Activated CD8-positive, alpha-beta T cell treated with anti-CD3 and anti-CD28 coated beads, Interleukin-2, amount 10 ng/mL, durations not matched to agents 7 days and 5 days (primary cell): ENCODE measurements at regions of chr3 and their contacts with region 1.

Region 1: DNA sequence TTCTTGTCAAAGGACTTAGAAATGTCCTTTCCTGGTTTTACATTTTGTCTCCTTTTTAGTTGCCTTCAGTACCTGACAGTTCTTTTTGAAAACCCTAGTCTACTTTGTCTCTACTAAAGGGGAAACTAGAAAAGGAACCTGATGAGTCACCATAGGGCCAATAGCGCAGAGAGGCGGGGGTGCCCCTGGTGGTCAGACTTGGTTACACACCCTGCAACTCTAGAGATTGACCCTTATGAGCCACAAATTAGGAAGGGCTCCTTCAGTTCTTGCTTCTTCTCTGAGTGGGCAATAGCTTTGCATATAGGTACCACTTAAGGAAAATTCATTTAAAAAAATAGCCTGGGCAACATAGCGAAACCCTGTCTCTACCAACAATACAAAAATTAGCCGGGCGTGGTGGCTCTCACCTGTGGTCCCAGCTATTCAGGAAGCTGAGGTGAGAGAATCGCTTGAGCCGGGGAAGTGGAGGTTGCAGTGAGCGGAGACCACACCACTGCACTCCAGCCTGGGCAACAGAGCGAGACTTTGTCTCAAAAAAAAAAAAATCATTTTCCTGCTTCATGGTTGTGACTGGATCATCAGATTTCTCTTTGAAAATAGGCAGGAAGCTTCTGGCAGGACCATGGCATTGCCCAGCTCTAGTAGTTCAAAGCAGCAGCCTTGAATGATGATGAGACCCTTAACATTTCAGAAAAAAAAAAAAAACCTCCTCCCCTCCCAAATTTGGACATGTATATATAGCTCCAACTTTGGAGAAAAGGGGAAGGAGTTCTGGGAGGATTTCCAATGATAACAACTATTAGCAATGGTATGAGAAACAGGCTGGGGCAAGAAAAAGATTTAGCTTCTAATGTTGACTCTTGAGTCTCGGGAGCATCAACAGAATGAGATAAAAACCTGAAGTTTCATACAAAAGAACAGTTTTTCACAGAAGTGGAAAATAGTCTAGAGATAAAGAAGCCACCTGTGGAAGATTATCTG is 45.2 kb upstream of the RASA2 start:
- DNase-seq: peak; percentile 87
- ATAC-seq: peak; percentile 99
- H3K4me3 Mint-ChIP-seq: peak overlapping the region; percentile 20
- H3K27ac Mint-ChIP-seq: peak overlapping the region; percentile 55
- H3K4me1 Mint-ChIP-seq: peaks cover 31% of the 10 kb centered on the region
- H3K27me3 Mint-ChIP-seq: no peaks in the 10 kb centered on the region

Region 2: DNA sequence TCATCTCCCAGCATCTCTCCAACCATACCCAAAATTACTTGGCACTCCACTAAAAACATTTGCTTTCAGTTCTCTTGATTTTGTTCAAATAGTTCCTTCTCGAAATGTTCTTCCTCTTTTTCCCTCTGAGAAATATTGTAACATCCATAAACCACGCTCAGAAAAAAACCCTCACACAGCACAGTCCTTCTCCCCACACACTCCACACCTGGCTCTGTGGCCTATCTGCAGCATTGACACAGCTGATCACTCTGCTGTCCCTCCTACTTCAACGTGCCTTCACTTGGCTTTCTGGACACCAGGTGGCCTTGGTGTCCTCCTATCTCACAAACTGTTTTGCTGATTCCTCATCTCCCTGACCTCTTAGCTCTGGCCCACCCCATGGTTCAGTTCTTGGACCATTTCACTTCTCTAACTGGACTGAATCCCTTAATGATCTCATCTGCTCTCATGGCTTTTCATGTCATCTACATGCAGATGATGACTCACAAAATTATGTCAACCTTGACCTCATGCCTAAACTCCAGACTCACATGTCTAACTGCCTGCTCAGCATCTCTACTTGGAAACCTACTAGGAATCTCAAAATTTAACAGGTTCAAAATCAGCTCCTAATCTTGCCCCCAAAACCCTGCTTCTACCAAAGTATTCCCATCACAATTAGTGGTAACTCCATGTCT is 670.5 kb before region 1 on chr3:
- CTCF ChIA-PET with region 1: no interaction called
- POLR2A ChIA-PET with region 1: no interaction called
- DNase-seq: no peak
- ATAC-seq: no peak
- H3K4me3 Mint-ChIP-seq: no peak overlapping the region
- H3K27ac Mint-ChIP-seq: no peak overlapping the region
- H3K4me1 Mint-ChIP-seq: peaks cover 6% of the 10 kb centered on the region
- H3K27me3 Mint-ChIP-seq: no peaks in the 10 kb centered on the region

Region 3: DNA sequence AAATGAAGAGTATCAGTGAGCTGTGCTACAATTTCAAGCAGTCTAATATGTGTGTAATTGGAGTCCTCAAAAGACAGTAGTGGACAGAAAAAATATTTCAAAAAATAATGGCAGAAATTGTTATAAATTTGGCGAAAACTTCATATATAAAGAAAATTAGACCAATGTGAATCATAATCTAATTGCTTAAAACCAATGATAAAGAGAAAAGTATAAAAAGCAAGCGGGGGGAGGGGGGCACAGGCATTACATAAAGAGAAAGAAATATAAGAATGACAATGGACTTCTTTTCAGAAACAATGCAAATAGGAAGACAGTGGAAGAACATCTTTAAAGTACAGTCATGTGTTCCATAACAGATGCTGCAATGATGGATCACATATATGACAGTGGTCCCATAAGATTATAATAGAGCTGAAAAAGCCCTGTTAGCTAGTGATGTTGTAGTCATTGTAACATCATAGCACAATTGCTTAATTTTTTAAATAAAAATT is 218.0 kb before region 1 on chr3:
- CTCF ChIA-PET with region 1: no interaction called
- POLR2A ChIA-PET with region 1: no interaction called
- DNase-seq: no peak
- ATAC-seq: no peak
- H3K4me3 Mint-ChIP-seq: no peak overlapping the region
- H3K27ac Mint-ChIP-seq: no peak overlapping the region
- H3K4me1 Mint-ChIP-seq: no peaks in the 10 kb centered on the region
- H3K27me3 Mint-ChIP-seq: peaks cover 5% of the 10 kb centered on the region

Region 4: DNA sequence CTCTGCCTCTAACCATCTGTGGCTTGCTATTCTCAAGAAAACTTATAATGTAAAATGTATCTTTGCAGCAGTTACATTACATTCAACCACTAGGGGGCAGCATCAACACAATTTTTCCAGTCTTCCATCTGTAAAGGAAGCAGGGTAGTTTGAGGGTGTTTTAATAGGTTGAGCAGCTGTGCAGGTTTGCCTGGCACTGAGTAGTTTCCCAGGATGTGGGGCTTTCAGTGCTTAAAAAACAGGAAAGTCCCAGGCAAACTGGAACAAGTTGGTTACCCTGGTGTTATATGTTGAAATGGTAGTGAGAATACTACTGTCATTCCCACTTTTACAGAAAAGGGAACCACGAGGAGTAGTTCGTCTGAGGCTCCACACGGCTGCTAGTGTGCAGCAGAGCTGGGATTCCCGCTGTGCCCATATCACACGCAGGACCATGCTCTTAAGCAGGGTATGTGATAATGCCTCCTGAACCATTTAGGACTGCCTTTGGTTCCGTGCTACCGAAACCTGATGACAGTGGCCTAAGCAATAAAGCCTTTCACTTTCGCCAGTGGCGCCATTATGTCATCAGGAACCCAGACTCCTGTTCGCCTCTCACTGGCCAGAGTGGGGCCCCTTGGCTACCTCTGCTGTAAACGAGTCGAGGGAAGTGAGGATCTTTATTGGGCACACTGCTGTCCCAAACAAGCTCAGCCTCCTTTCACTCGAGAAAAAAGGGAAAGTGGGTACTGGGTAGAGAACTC is 138.0 kb before region 1 on chr3:
- CTCF ChIA-PET with region 1: interaction called, 32 read pairs
- POLR2A ChIA-PET with region 1: interaction called, 3 read pairs
- DNase-seq: peak; percentile 83
- ATAC-seq: peak; percentile 74
- H3K4me3 Mint-ChIP-seq: no peak overlapping the region
- H3K27ac Mint-ChIP-seq: no peak overlapping the region
- H3K4me1 Mint-ChIP-seq: peaks cover 53% of the 10 kb centered on the region
- H3K27me3 Mint-ChIP-seq: peaks cover 2% of the 10 kb centered on the region

Region 5: DNA sequence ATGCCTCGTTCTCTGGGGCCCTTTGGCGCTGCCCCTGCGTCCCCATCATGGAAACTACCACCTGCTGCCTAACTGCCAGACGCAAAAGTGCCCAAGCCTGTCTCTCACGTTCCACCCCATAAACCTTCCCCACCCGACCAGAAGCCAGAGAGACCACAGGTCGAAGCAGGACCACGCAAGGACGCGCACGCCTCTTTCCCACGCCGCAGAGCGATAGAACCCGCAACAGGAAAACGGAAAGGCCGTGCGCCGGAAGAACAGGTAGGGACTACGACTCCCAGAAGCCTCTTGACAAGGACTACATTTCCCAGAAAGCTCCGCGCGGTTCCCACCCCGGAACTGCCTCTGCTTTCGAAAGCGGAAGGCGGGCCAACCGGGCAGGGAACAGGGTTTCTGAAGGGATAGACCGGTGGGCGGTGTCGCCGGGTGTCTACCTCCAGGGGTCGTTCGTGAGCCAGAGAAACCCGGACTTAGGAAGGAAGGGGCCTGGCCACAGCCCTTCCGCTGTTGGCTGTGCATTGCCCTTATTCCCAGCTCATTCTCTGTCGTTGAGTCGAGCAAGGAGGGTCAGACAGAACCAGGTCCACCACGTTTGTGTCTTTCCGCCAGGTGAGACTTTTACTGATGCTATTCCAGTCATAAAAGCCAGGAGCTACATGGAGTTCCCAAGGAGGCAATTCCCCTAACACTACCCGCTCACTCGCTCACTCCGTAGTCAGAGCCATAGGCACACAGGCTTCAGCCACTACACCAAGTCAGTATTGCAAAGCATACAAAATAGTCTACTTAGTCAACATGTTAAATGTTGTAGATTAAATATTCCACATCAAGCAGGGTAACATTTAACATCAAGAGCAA is 129.9 kb before region 1 on chr3:
- CTCF ChIA-PET with region 1: interaction called, 48 read pairs
- POLR2A ChIA-PET with region 1: interaction called, 10 read pairs
- DNase-seq: peak; percentile 100
- ATAC-seq: peak; percentile 95
- H3K4me3 Mint-ChIP-seq: peak overlapping the region; percentile 85
- H3K27ac Mint-ChIP-seq: peak overlapping the region; percentile 99
- H3K4me1 Mint-ChIP-seq: peaks cover 57% of the 10 kb centered on the region
- H3K27me3 Mint-ChIP-seq: no peaks in the 10 kb centered on the region

Region 6: GRCh38 chr3:141370065-141370533 is 71.6 kb before region 1 on chr3:
- CTCF ChIA-PET with region 1: interaction called, 48 read pairs
- POLR2A ChIA-PET with region 1: no interaction called
- DNase-seq: peak; percentile 77
- ATAC-seq: peak; percentile 97
- H3K4me3 Mint-ChIP-seq: no peak overlapping the region
- H3K27ac Mint-ChIP-seq: no peak overlapping the region
- H3K4me1 Mint-ChIP-seq: peaks cover 22% of the 10 kb centered on the region
- H3K27me3 Mint-ChIP-seq: peaks cover 4% of the 10 kb centered on the region

Region 7: GRCh38 chr3:141383555-141384129 is 58.0 kb before region 1 on chr3:
- CTCF ChIA-PET with region 1: interaction called, 20 read pairs
- POLR2A ChIA-PET with region 1: no interaction called
- DNase-seq: no peak
- ATAC-seq: no peak
- H3K4me3 Mint-ChIP-seq: no peak overlapping the region
- H3K27ac Mint-ChIP-seq: no peak overlapping the region
- H3K4me1 Mint-ChIP-seq: peaks cover 11% of the 10 kb centered on the region
- H3K27me3 Mint-ChIP-seq: peaks cover 18% of the 10 kb centered on the region

Region 8: DNA sequence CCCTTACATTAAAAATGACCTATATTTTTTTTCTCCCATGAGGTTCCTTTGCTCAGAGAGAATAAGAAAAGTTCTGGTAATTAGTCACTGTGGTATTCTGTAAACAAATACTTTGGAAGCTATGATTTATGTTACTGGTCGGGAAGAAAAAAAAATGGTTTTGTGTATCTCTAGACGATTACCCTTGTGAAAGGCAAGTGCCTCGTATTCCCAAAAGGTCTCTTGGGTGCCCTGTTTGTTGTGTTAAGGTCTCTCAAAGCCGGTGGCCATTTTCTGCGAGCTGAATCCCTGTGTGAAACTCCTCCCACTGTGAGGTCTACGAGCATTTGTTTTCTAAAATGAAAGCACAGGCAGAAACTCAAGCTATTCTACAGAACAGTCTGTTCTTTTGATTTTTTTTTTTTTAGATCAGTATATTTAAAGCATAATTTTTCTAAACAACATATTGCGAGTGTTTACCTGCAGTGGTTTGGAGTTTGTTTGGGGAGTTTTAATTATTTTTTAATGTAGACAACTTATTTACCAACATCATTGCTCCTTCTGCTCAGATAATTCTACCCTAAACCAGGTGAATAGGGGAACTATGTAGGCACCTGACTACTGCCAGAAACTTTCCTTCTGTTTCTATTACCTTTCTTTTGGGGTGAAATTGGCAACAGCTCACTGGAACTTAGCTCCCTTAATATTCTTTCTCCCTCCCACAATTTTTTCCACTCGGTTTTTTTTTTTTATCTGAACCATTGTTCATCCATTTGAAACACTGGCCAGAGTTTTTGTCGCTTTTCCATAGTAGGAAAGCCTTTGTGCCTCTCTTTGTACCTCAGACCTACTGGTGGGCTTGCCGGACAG is 29.4 kb before region 1 on chr3:
- CTCF ChIA-PET with region 1: interaction called, 72 read pairs
- POLR2A ChIA-PET with region 1: no interaction called
- DNase-seq: peak; percentile 79
- ATAC-seq: peak; percentile 62
- H3K4me3 Mint-ChIP-seq: peak overlapping the region; percentile 79
- H3K27ac Mint-ChIP-seq: peak overlapping the region; percentile 97
- H3K4me1 Mint-ChIP-seq: peaks cover 68% of the 10 kb centered on the region
- H3K27me3 Mint-ChIP-seq: no peaks in the 10 kb centered on the region

Region 9: GRCh38 chr3:141426404-141427034 is 15.2 kb before region 1 on chr3:
- CTCF ChIA-PET with region 1: interaction called, 72 read pairs
- POLR2A ChIA-PET with region 1: no interaction called
- DNase-seq: no peak
- ATAC-seq: no peak
- H3K4me3 Mint-ChIP-seq: no peak overlapping the region
- H3K27ac Mint-ChIP-seq: no peak overlapping the region
- H3K4me1 Mint-ChIP-seq: peaks cover 6% of the 10 kb centered on the region
- H3K27me3 Mint-ChIP-seq: no peaks in the 10 kb centered on the region